ENCODE measurements at regions of chr5 and their contacts with region 1.

Region 1: GRCh38 chr5:140244525-140245025 is 58.3 kb downstream of the PFDN1 start:
- DNase-seq: peak; percentile 94
- ATAC-seq: peak; percentile 78 to 86
- H3K4me3 ChIP-seq: no peak overlapping the region
- H3K27ac ChIP-seq: no peak overlapping the region
- H3K4me1 ChIP-seq: peaks cover 65% of the 10 kb centered on the region
- H3K27me3 ChIP-seq: no peaks in the 10 kb centered on the region
- CTCF ChIP-seq: peak; percentile 88

Region 2: GRCh38 chr5:140346348-140347101 is 102.0 kb after region 1 on chr5 and contains the start of gene HBEGF:
- intact Hi-C with region 1: loop called (anchors 5 kb)
- DNase-seq: peak; percentile 91
- ATAC-seq: peak; percentile 90 to 94
- H3K4me3 ChIP-seq: peak within 1 kb of the TSS; percentile 79
- H3K27ac ChIP-seq: peak within 1 kb of the TSS; percentile 77
- H3K4me1 ChIP-seq: peaks cover 60% of the 10 kb centered on the region
- H3K27me3 ChIP-seq: no peaks in the 10 kb centered on the region
- CTCF ChIP-seq: peak; percentile 35
- total RNA-seq, gene HBEGF: 43.2 TPM